ENCODE measurements at regions of chr13 and their contacts with region 1.

Region 1: GRCh38 chr13:107842562-107843180 is 372.7 kb downstream of the LIG4 start:
- DNase-seq: peak; percentile 58
- ATAC-seq: peak; percentile 25; the same call in 1 of the 2 replicates
- H3K4me3 ChIP-seq: no peak overlapping the region
- H3K27ac ChIP-seq: no peak overlapping the region
- H3K4me1 ChIP-seq: peaks cover 10% of the 10 kb centered on the region
- H3K27me3 ChIP-seq: no peaks in the 10 kb centered on the region
- CTCF ChIP-seq: no peak
- POLR2A ChIP-seq: no peak
- RAD21 ChIP-seq: no peak

Region 2: DNA sequence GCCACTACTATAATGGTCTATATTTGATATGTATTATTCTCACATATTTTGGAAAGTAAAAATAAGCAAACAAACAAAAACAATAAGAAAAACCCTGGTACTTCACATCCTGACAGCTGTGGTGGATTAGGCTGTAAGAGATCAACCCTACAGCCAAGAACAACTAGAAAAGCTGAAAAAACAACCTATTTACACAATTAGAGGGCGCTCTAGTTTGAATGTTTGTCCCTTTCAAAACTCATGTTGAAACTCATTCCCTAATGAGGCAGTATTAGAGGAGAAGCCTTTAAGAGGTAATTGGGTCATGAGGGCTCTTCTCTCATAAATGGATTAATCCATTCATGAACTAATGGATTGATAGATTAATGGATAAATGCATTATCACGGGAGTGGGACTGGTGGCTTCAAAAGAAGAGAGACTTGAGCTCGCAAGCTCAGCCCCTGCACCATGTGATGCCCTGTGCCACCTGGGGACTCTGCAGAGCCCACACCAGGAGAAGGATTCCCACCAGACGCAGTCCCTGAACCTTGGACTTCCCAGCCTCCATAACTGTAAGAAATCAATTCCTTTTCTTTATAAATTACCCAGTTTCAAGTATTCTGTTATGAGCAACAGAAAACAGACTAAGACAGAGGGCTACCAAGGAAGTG is 540.8 kb before region 1 on chr13:
- CTCF ChIA-PET with region 1: no interaction called
- POLR2A ChIA-PET with region 1: no interaction called
- dilution Hi-C with region 1: no loop called
- in situ Hi-C with region 1: no loop called
- intact Hi-C with region 1: no loop called
- DNase-seq: no peak
- ATAC-seq: no peak
- H3K4me3 ChIP-seq: no peak overlapping the region
- H3K27ac ChIP-seq: no peak overlapping the region
- H3K4me1 ChIP-seq: no peaks in the 10 kb centered on the region
- H3K27me3 ChIP-seq: no peaks in the 10 kb centered on the region
- CTCF ChIP-seq: no peak
- POLR2A ChIP-seq: no peak
- RAD21 ChIP-seq: no peak

Region 3: GRCh38 chr13:107743983-107744382 is 98.7 kb before region 1 on chr13:
- CTCF ChIA-PET with region 1: no interaction called
- POLR2A ChIA-PET with region 1: no interaction called
- dilution Hi-C with region 1: no loop called
- in situ Hi-C with region 1: no loop called
- intact Hi-C with region 1: loop called (anchors 5 kb)
- DNase-seq: peak; percentile 84
- ATAC-seq: peak; percentile 71
- H3K4me3 ChIP-seq: no peak overlapping the region
- H3K27ac ChIP-seq: no peak overlapping the region
- H3K4me1 ChIP-seq: peaks cover 5% of the 10 kb centered on the region
- H3K27me3 ChIP-seq: no peaks in the 10 kb centered on the region
- CTCF ChIP-seq: no peak
- POLR2A ChIP-seq: no peak
- RAD21 ChIP-seq: no peak